IMR-90 (cell line): ENCODE measurements at regions of chr14 and their contacts with region 1.

Region 1: DNA sequence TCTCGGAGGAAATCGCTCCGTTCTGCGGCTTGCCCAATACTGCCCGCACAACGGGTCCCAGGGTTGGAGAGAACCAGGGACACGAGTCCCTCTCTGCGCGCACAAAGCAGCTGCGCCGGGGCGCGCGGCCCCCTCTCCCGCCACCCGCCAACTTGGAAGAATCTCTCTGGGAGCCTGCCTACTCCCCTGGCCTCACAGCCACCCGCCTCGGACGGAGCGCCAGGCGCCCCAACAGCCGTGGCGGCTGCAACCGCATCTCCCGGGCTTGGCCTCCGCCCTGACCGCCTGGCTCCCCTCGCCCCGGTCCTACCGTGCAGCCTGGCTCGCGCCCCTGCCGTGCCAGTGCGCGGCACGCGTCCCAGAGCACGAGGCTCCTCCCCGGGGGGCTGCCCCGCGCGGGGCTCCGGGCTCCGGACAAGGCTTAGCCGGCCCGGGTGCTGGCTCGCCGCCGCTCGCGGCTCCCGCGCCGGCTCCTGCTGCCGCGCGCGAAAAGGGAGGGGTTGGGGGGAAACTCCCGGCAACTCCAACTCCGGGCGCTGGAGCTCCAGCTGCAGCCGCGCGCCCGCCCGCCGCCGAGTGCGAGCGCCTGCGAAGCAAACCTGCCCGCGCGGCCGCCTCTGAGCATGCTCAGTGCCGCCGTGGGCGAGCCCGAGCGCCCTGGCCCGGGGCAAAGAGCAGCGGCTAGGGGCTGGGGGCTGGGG is at the start of gene STXBP6:
- DNase-seq: peak; percentile 65
- ATAC-seq: peak; percentile 88
- H3K4me3 ChIP-seq: peak within 1 kb of the TSS; percentile 84
- H3K27ac ChIP-seq: peak within 1 kb of the TSS; percentile 22; the same call in 1 of the 2 replicates
- H3K4me1 ChIP-seq: peaks cover 3% of the 10 kb centered on the region; the same call in 1 of the 2 replicates
- H3K27me3 ChIP-seq: peaks cover 1% of the 10 kb centered on the region; the same call in 1 of the 2 replicates
- CTCF ChIP-seq: no peak
- POLR2A ChIP-seq: no peak
- RAD21 ChIP-seq: no peak
- total RNA-seq, gene STXBP6: 14.3 and 15.6 TPM in 2 replicates

Region 2: DNA sequence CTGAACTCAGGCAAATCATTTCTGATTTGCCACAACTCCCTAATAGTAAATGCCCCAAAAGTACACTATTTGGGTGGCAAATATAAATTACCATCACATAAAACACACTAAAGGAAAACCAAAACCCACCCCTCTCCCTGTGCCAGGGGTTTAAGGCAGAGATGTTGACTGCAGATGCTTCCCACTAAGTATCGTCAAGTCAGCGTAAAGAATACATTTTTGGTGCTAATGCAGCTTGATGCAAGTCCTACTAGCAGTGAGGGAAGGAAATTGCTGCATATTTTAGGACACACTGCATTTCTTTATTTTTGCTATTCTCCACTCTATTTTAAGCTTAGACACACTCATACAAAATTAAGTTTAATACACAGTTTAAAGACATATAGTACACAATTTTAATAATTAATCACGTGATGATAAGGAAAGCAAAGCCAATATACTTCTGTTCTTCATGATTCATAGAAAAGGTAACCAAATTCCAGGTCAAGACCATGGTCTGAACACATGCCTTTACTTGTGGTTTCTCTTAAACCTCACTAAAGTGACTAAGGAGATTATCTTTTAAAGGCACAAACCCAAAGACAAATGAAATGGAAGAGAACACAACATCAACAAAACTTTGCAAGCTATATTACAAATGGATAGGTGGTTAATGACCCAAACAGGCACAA is 162.0 kb before region 1 on chr14:
- CTCF ChIA-PET with region 1: no interaction called
- POLR2A ChIA-PET with region 1: no interaction called
- dilution Hi-C with region 1: no loop called
- in situ Hi-C with region 1: no loop called
- intact Hi-C with region 1: no loop called
- DNase-seq: peak; percentile 24
- ATAC-seq: no peak
- H3K4me3 ChIP-seq: no peak overlapping the region
- H3K27ac ChIP-seq: no peak overlapping the region
- H3K4me1 ChIP-seq: no peaks in the 10 kb centered on the region
- H3K27me3 ChIP-seq: no peaks in the 10 kb centered on the region
- CTCF ChIP-seq: no peak
- POLR2A ChIP-seq: no peak
- RAD21 ChIP-seq: no peak

Region 3: GRCh38 chr14:24900269-24901100 is 149.2 kb before region 1 on chr14:
- CTCF ChIA-PET with region 1: no interaction called
- POLR2A ChIA-PET with region 1: no interaction called
- dilution Hi-C with region 1: no loop called
- in situ Hi-C with region 1: no loop called
- intact Hi-C with region 1: loop called (anchors 5 kb)
- DNase-seq: peak; percentile 46
- ATAC-seq: 0 out of 2 replicates have a peak, but pooled peaks have one; percentile 25
- H3K4me3 ChIP-seq: no peak overlapping the region
- H3K27ac ChIP-seq: no peak overlapping the region
- H3K4me1 ChIP-seq: peaks cover 11% of the 10 kb centered on the region
- H3K27me3 ChIP-seq: no peaks in the 10 kb centered on the region
- CTCF ChIP-seq: no peak
- POLR2A ChIP-seq: no peak
- RAD21 ChIP-seq: no peak

Region 4: DNA sequence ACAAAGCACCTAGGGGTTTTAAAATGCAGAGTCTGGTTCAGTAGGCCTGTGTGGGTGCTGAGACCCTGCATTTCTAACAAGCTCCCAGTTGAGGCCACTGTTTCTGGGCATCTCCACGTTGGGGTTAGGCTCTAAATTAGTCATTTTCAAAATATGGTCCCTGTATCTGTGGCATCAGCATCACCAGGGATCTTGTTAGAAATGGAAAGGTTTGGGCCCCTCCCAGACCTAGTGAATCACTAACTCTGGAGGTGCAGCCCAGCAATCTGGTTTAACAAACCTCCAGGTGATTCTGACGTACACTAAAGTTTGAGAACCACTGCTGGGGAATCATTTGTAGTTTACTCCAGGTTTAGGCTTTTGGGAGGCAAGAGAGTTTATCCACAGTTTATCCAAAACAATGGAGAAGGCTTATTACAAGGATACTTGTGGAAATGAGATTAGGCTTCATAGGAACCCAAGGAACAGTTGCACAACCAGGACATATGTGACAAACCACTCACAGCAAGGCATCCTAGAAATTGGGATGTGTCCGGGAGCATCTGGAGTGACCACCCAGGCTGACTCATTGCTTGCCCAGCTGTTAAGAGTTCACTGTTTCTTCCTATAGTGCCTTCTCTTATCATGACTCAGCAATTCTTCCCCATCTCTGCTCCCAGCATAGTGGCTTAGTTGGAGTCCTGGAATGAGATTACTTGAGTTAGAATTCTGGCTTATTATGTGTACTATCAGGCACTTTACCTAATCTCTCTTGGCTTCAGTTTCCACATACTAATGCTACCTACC is 71.8 kb after region 1 on chr14:
- CTCF ChIA-PET with region 1: no interaction called
- POLR2A ChIA-PET with region 1: no interaction called
- dilution Hi-C with region 1: no loop called
- in situ Hi-C with region 1: loop called (anchors 5 kb)
- intact Hi-C with region 1: no loop called
- DNase-seq: peak; percentile 92
- ATAC-seq: peak; percentile 93
- H3K4me3 ChIP-seq: no peak overlapping the region
- H3K27ac ChIP-seq: no peak overlapping the region; the same call in 1 of the 2 replicates
- H3K4me1 ChIP-seq: peaks cover 7% of the 10 kb centered on the region
- H3K27me3 ChIP-seq: no peaks in the 10 kb centered on the region
- CTCF ChIP-seq: 0 out of 2 replicates have a peak, but pooled peaks have one; percentile 1
- POLR2A ChIP-seq: no peak
- RAD21 ChIP-seq: no peak

Region 5: DNA sequence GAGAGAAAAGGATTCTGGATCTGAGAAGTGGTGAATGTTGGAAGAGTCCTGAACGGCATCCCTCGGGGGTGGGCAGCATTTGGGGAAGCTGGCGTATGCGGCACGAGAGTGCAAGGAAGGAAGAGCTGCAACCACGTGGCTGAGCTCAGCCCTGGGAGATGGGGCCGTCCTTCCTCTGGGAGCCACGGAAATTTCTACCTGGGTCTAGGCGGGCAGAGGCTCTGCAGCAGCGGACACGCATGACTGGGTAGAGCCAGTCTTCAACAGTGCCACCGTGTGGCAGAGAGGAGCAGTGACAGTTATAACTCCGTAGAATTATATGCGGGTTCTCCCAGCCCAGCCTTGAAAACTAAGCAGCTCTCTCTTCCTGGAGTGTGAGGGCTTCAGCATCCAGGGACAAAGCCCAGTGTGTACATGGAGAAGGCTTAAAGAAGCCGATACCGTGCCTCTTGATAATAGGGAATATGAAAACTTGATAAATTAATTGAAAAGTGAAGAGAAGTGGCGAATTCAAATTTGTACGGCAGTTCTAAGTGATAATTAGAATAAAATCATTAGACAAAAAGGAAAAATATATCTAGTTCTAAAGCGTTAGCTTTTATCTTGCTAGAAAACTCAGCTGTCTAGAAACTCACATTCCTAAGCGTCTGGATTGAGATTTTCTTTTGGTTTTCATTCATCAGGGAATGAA is 83.2 kb after region 1 on chr14:
- CTCF ChIA-PET with region 1: no interaction called
- POLR2A ChIA-PET with region 1: no interaction called
- dilution Hi-C with region 1: no loop called
- in situ Hi-C with region 1: no loop called
- intact Hi-C with region 1: loop called (anchors 1 kb)
- DNase-seq: peak; percentile 55
- ATAC-seq: peak; percentile 100
- H3K4me3 ChIP-seq: no peak overlapping the region
- H3K27ac ChIP-seq: no peak overlapping the region
- H3K4me1 ChIP-seq: no peaks in the 10 kb centered on the region
- H3K27me3 ChIP-seq: peaks cover 16% of the 10 kb centered on the region
- CTCF ChIP-seq: peak; percentile 81
- POLR2A ChIP-seq: no peak
- RAD21 ChIP-seq: peak; percentile 86

Region 6: GRCh38 chr14:25150934-25151790 is 101.4 kb after region 1 on chr14:
- CTCF ChIA-PET with region 1: no interaction called
- POLR2A ChIA-PET with region 1: no interaction called
- dilution Hi-C with region 1: no loop called
- in situ Hi-C with region 1: no loop called
- intact Hi-C with region 1: loop called (anchors 2 kb)
- DNase-seq: peak; percentile 71
- ATAC-seq: peak; percentile 82
- H3K4me3 ChIP-seq: no peak overlapping the region
- H3K27ac ChIP-seq: no peak overlapping the region
- H3K4me1 ChIP-seq: no peaks in the 10 kb centered on the region
- H3K27me3 ChIP-seq: peaks cover 1% of the 10 kb centered on the region
- CTCF ChIP-seq: peak; percentile 78
- POLR2A ChIP-seq: no peak
- RAD21 ChIP-seq: peak; percentile 76

Region 7: DNA sequence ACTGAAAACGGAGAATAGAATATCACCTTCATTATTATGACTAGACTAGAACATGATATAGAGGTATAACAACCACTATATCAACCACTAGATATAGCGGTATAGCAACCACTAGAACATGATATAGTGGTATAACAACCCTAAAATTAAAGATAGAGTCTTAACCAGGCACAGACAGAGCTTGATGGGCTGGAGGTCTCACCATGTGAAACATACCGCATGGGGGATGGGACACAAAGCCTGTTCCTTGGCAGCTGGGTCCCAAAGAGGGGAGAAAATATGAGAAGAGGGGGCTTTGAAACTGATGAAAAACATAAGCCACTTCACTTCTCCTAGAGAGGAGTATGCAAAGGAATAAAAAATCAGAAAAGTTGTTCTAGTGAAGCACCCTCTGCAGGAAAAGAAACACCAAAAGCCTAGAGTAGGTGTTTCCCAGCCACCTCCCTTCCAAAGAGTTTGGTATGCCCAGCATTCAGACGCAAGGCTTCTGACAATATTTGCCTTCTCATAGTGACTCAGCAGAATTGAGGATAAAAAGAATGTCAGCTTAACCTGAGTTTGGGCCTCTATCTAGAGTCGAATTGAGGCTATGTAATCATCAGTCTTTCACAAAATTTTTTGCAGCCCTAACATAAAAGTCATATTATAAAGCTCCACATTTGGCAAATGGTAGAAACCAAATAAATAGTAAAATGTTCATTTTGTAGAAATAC is 1231.7 kb after region 1 on chr14:
- CTCF ChIA-PET with region 1: no interaction called
- POLR2A ChIA-PET with region 1: no interaction called
- dilution Hi-C with region 1: no loop called
- in situ Hi-C with region 1: no loop called
- intact Hi-C with region 1: no loop called
- DNase-seq: peak; percentile 87
- ATAC-seq: peak; percentile 79
- H3K4me3 ChIP-seq: no peak overlapping the region
- H3K27ac ChIP-seq: peak overlapping the region; percentile 99; the same call in 1 of the 2 replicates
- H3K4me1 ChIP-seq: peaks cover 6% of the 10 kb centered on the region
- H3K27me3 ChIP-seq: no peaks in the 10 kb centered on the region
- CTCF ChIP-seq: no peak
- POLR2A ChIP-seq: no peak
- RAD21 ChIP-seq: no peak